Lower leg skin (tissue), 4 donors: ENCODE measurements at regions of chr7 and their contacts with region 1.

Region 1: GRCh38 chr7:156219307-156220077 is 407.2 kb upstream of the SHH start:
- DNase-seq: peak in 1 of 2 donors; percentile 72
- H3K4me3 ChIP-seq: no peak overlapping the region
- CTCF ChIP-seq: no peak
- POLR2A ChIP-seq: no peak

Region 2: DNA sequence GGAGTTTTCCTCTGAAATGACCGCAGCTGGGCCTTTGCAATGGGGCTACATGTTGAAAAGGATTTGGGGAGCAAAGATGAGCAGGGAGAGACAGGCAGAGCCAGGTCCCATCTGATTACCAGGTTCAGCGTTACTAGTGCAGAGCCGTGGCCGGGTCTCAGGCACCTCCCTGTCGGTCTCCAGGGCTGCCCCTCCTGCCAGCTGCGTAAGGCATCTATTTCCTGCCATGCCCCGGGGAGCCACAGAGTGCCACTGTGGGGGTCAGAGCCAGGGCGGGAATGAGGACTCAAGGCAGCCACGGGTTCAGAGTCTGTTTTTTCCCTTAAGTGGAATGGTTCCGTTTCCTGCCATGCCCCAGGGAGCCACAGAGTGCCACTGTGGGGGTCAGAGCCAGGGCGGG is 24.7 kb before region 1 on chr7:
- intact Hi-C with region 1: loop called (anchors 1 kb)
- DNase-seq: peak in 1 of 2 donors; percentile 71
- H3K4me3 ChIP-seq: no peak overlapping the region
- CTCF ChIP-seq: no peak
- POLR2A ChIP-seq: no peak

Region 3: DNA sequence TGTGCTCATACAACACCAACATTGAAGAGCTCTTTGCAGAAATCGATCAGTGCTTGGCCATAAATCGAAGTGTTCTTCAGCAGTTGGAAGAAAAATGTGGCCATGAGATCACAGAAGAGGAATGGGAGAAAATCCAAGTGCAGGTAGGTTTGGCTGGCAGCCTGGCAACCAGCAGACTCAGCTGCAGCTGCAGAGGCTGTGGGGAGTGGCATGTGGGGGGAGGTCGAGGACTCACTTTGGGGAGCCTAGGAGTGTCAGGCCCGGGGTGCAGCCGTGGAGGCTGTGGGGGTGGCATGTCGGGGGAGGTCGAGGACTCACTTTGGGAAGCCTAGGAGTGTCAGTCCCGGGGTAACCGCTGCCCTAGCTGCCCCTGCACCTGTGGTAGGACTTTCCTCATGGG is 456.2 kb after region 1 on chr7:
- intact Hi-C with region 1: no loop called
- DNase-seq: no peak
- H3K4me3 ChIP-seq: no peak overlapping the region
- CTCF ChIP-seq: no peak
- POLR2A ChIP-seq: no peak